Heart right ventricle (tissue), 16 donors: ENCODE measurements at regions of chr19 and their contacts with region 1.

Region 1: GRCh38 chr19:12145348-12145747 is 5.2 kb upstream of the ZNF20 start:
- DNase-seq: no peak
- ATAC-seq: no peak
- H3K4me3 ChIP-seq: no peak overlapping the region
- H3K27ac ChIP-seq: no peak overlapping the region
- H3K4me1 ChIP-seq: peaks cover 0 to 12% (median 10%) of the 10 kb centered on the region in 9 donors
- H3K27me3 ChIP-seq: no peaks in the 10 kb centered on the region
- CTCF ChIP-seq: no peak

Region 2: GRCh38 chr19:11881151-11881800 is 264.1 kb before region 1 on chr19:
- intact Hi-C with region 1: loop called in 9 of 10 experiments (anchors 1 to 10 kb)
- DNase-seq: peak; percentile 11 to 53
- ATAC-seq: peak; percentile 64 to 86 (median 72)
- H3K4me3 ChIP-seq: no peak overlapping the region
- H3K27ac ChIP-seq: no peak overlapping the region
- H3K4me1 ChIP-seq: peaks cover 0 to 5% (median 0%) of the 10 kb centered on the region in 9 donors
- H3K27me3 ChIP-seq: no peaks in the 10 kb centered on the region
- CTCF ChIP-seq: peak; percentile 41 to 80 (median 72)